Panc1 (cell line): ENCODE measurements at regions of chr6 and their contacts with region 1.

Region 1: GRCh38 chr6:56370561-56371211 is 123.3 kb upstream of the COL21A1 start:
- DNase-seq: peak; percentile 30
- ATAC-seq: peak; percentile 31; the same call in 1 of the 2 replicates
- H3K4me3 ChIP-seq: no peak overlapping the region
- H3K27ac ChIP-seq: no peak overlapping the region
- H3K4me1 ChIP-seq: peaks cover 7% of the 10 kb centered on the region; the same call in 1 of the 2 replicates
- H3K27me3 ChIP-seq: no peaks in the 10 kb centered on the region
- CTCF ChIP-seq: no peak

Region 2: DNA sequence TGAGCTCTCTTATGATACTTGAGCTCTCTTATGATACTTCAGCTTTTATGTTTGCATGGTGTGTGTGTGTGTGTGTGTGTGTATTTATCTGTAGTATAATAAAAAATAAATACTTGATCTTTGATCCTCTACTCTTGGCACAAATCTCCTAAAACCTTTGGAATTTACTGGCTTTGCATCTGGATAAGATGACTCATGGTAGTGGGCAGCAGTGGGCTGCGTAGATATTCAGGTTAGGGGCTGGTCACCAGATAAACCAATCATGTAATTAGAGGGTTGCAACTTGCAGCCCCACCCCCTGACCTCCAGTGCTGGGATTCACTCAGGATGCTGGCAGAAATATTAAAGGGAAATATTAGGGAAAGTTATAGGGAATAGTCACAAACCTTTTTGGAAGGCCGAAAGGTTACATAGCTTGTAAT is 28.6 kb after region 1 on chr6:
- CTCF ChIA-PET with region 1: interaction called, 12 read pairs
- POLR2A ChIA-PET with region 1: no interaction called
- in situ Hi-C with region 1: no loop called
- intact Hi-C with region 1: no loop called
- DNase-seq: no peak
- ATAC-seq: no peak
- H3K4me3 ChIP-seq: no peak overlapping the region
- H3K27ac ChIP-seq: no peak overlapping the region
- H3K4me1 ChIP-seq: no peaks in the 10 kb centered on the region
- H3K27me3 ChIP-seq: no peaks in the 10 kb centered on the region
- CTCF ChIP-seq: no peak

Region 3: DNA sequence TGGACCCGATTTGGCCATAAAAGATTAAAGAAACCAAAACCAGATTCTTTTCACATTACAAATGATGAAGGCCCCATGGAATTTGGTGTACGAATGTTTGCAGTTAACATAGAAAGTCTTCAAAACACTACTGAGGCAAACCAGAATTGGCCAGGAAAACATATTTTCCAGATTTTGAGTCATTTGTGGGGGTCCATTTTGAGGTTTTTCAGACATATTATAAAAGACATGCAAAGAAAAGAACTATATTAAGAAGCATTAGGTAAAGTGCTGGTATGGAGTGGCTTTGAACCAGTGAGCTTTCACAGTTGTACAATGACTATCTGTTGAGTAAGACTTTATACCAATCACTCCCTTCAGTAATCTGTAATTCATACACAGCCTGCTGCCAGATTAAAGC is 45.6 kb after region 1 on chr6:
- CTCF ChIA-PET with region 1: no interaction called
- POLR2A ChIA-PET with region 1: no interaction called
- in situ Hi-C with region 1: no loop called
- intact Hi-C with region 1: loop called (anchors 5 kb)
- DNase-seq: no peak
- ATAC-seq: no peak
- H3K4me3 ChIP-seq: no peak overlapping the region
- H3K27ac ChIP-seq: no peak overlapping the region
- H3K4me1 ChIP-seq: no peaks in the 10 kb centered on the region
- H3K27me3 ChIP-seq: peaks cover 4% of the 10 kb centered on the region; the same call in 1 of the 2 replicates
- CTCF ChIP-seq: no peak

Region 4: DNA sequence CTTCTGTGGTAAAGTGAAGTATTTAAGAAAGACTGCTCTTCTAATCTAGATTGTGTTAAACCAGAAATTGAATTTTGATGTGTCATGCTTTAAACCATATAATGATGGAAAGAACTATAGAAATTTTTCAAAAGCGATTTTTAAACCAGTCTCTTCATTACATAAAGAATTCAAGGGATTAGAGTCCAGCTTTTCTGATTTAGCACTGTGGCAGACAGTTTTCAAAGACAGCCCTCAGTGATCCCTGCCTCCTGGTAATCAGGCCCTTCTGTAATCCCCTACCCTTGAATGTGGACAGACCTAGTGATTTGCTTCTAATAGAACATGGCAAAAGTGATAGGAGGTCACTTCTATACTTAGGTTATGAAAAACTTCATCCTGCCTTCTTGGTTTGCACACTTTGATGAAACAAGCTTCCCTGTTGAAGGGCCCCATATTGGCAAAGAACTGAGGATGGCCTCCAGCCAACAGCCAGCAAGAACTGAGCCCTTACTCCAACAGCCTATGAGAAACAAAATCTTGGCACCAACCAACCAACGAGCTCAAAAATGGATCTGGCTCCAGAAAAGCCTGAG is 80.6 kb after region 1 on chr6:
- CTCF ChIA-PET with region 1: no interaction called
- POLR2A ChIA-PET with region 1: no interaction called
- in situ Hi-C with region 1: no loop called
- intact Hi-C with region 1: no loop called
- DNase-seq: no peak
- ATAC-seq: no peak
- H3K4me3 ChIP-seq: no peak overlapping the region
- H3K27ac ChIP-seq: no peak overlapping the region
- H3K4me1 ChIP-seq: no peaks in the 10 kb centered on the region
- H3K27me3 ChIP-seq: no peaks in the 10 kb centered on the region
- CTCF ChIP-seq: no peak

Region 5: DNA sequence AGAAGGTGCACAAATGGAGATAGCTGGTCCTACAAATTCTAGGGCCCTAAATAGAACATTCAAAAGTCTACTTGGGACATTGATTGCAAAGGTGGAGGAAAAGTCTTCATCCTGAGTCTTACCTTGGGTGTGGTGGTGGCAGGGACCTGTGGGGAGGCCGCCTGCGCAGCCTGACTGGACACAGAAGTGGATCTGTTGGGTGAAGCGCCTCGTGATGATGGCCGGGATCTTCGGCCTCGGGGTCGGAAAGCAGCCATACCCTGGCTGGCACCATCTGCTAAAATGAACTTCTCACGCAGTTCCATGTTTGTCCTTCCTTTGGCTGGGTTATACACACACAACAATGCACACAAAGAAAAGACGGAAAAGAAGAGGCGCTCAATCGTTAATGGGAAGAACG is 92.8 kb after region 1 on chr6:
- CTCF ChIA-PET with region 1: no interaction called
- POLR2A ChIA-PET with region 1: no interaction called
- in situ Hi-C with region 1: no loop called
- intact Hi-C with region 1: loop called (anchors 5 kb)
- DNase-seq: no peak
- ATAC-seq: no peak
- H3K4me3 ChIP-seq: no peak overlapping the region
- H3K27ac ChIP-seq: no peak overlapping the region
- H3K4me1 ChIP-seq: no peaks in the 10 kb centered on the region
- H3K27me3 ChIP-seq: no peaks in the 10 kb centered on the region
- CTCF ChIP-seq: no peak

Region 6: GRCh38 chr6:56570413-56571359 is 200.0 kb after region 1 on chr6:
- CTCF ChIA-PET with region 1: no interaction called
- POLR2A ChIA-PET with region 1: interaction called, 17 read pairs
- in situ Hi-C with region 1: no loop called
- intact Hi-C with region 1: no loop called
- DNase-seq: no peak
- ATAC-seq: peak; percentile 83
- H3K4me3 ChIP-seq: no peak overlapping the region
- H3K27ac ChIP-seq: no peak overlapping the region
- H3K4me1 ChIP-seq: no peaks in the 10 kb centered on the region
- H3K27me3 ChIP-seq: no peaks in the 10 kb centered on the region
- CTCF ChIP-seq: peak; percentile 75